ENCODE measurements at regions of chr9 and their contacts with region 1.

Region 1: GRCh38 chr9:133459476-133460404 is at the start of gene CACFD1:
- DNase-seq: peak; percentile 93
- ATAC-seq: peak; percentile 75
- H3K4me3 ChIP-seq: peak within 1 kb of the TSS; percentile 89 to 94 (median 89)
- H3K27ac ChIP-seq: peak within 1 kb of the TSS; percentile 99
- H3K4me1 ChIP-seq: peaks cover 52% of the 10 kb centered on the region
- H3K27me3 ChIP-seq: no peaks in the 10 kb centered on the region; a peak in 1 of 5 replicates
- CTCF ChIP-seq: no peak
- EP300 ChIP-seq: no peak
- POLR2A ChIP-seq: peak in 1 of 2 experiments; percentile 60; a peak in 1 of 4 replicates
- RAD21 ChIP-seq: peak; percentile 56; the same call in 1 of the 2 replicates
- total RNA-seq, gene CACFD1: 8.2 and 13.8 TPM in 2 replicates

Region 2: GRCh38 chr9:133115448-133116345 is 344.0 kb before region 1 on chr9:
- CTCF ChIA-PET with region 1: no interaction called
- POLR2A ChIA-PET with region 1: no interaction called
- in situ Hi-C with region 1: no loop called
- intact Hi-C with region 1: no loop called
- DNase-seq: no peak
- ATAC-seq: no peak
- H3K4me3 ChIP-seq: no peak overlapping the region
- H3K27ac ChIP-seq: no peak overlapping the region
- H3K4me1 ChIP-seq: peaks cover 36% of the 10 kb centered on the region
- H3K27me3 ChIP-seq: no peaks in the 10 kb centered on the region
- CTCF ChIP-seq: no peak
- EP300 ChIP-seq: no peak
- POLR2A ChIP-seq: no peak
- RAD21 ChIP-seq: no peak

Region 3: GRCh38 chr9:133347985-133348717 is 111.6 kb before region 1 on chr9 and contains the starts of genes MED22 and RPL7A:
- CTCF ChIA-PET with region 1: no interaction called
- POLR2A ChIA-PET with region 1: interaction called, 22 read pairs
- in situ Hi-C with region 1: no loop called
- intact Hi-C with region 1: no loop called
- DNase-seq: peak; percentile 94
- ATAC-seq: peak; percentile 73
- H3K4me3 ChIP-seq: peak within 1 kb of the TSS; percentile 82 to 100 (median 97)
- H3K27ac ChIP-seq: peak within 1 kb of the TSS; percentile 97
- H3K4me1 ChIP-seq: peaks cover 29% of the 10 kb centered on the region
- H3K27me3 ChIP-seq: no peaks in the 10 kb centered on the region; a peak in 1 of 5 replicates
- CTCF ChIP-seq: 0 out of 2 replicates have a peak, but pooled peaks have one; percentile 7
- EP300 ChIP-seq: 0 out of 4 replicates have a peak, but pooled peaks of 1 of the 2 experiments have one; percentile 26
- POLR2A ChIP-seq: peak in 1 of 2 experiments; percentile 99; a peak in 2 of 4 replicates
- RAD21 ChIP-seq: peak; percentile 25; the same call in 1 of the 2 replicates
- total RNA-seq, gene MED22: 19.6 and 22.1 TPM in 2 replicates
- total RNA-seq, gene RPL7A: 2,938 and 3,359 TPM in 2 replicates

Region 4: DNA sequence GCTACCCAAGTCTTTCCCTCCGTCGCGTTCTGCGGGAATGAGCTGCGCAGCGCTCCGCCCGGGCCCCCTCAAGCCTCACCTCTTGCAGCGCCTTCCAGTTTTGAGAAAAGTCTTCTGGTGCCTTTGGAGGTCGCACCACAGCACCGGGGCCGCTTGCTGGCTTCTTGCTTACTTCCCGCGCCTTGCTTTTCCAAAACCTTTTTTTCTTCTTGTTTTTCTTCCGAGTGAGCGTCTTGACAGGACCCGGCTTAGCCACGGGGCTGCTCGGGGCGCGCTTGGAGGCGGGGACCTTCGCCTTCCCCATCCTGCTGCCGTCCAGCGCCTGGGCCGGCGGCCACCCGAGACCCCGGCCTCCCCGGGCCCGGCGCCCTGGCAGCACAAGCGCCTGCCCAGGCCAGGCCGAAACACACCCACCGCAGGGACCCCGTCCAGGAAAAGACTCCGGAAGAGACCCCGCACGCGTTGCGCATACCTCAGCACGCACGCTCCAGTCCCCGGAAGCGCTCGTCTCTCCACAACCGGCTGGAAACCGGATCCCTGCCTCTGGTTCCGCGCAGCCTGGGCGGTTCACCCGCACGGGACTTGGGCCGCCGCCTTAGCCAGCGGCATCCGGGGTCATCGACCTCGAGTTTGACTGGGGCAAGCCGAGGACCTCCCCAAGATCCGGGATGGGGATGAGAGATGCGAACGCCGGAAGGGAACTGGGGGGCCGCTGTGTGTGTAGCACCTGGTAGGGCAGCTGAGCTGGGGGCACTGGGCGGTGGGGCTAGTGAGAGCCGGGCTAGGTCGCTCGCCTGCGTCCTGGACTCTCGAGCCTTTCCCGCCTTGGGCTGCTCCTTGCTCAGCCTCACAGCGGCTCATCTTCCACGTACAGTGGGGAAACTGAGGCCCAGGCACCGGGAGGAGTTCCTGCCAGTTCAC is 41.9 kb before region 1 on chr9 and contains the start of gene REXO4:
- CTCF ChIA-PET with region 1: no interaction called
- POLR2A ChIA-PET with region 1: interaction called, 19 read pairs
- in situ Hi-C with region 1: no loop called
- intact Hi-C with region 1: no loop called
- DNase-seq: peak; percentile 88
- ATAC-seq: peak; percentile 87
- H3K4me3 ChIP-seq: peak within 1 kb of the TSS; percentile 71 to 89 (median 84)
- H3K27ac ChIP-seq: peak within 1 kb of the TSS; percentile 95
- H3K4me1 ChIP-seq: peaks cover 70% of the 10 kb centered on the region
- H3K27me3 ChIP-seq: no peaks in the 10 kb centered on the region; a peak in 1 of 5 replicates
- CTCF ChIP-seq: peak; percentile 44
- EP300 ChIP-seq: peak; percentile 22 to 38; a peak in 2 of 4 replicates
- POLR2A ChIP-seq: peak; percentile 70 to 84
- RAD21 ChIP-seq: peak; percentile 51; the same call in 1 of the 2 replicates
- total RNA-seq, gene REXO4: 30.4 and 32.9 TPM in 2 replicates

Region 5: GRCh38 chr9:133470427-133470924 is 10.7 kb after region 1 on chr9:
- CTCF ChIA-PET with region 1: no interaction called
- POLR2A ChIA-PET with region 1: interaction called, 11 read pairs
- in situ Hi-C with region 1: no loop called
- intact Hi-C with region 1: no loop called
- DNase-seq: no peak
- ATAC-seq: peak; percentile 21
- H3K4me3 ChIP-seq: no peak overlapping the region
- H3K27ac ChIP-seq: no peak overlapping the region
- H3K4me1 ChIP-seq: peaks cover 10% of the 10 kb centered on the region; the same call in 1 of the 2 replicates
- H3K27me3 ChIP-seq: no peaks in the 10 kb centered on the region
- CTCF ChIP-seq: peak; percentile 32; the same call in 1 of the 2 replicates
- EP300 ChIP-seq: no peak
- POLR2A ChIP-seq: no peak; a peak in 1 of 4 replicates
- RAD21 ChIP-seq: no peak

Region 6: GRCh38 chr9:133478851-133479711 is 19.3 kb after region 1 on chr9 and contains the start of gene SLC2A6:
- CTCF ChIA-PET with region 1: no interaction called
- POLR2A ChIA-PET with region 1: interaction called, 50 read pairs
- in situ Hi-C with region 1: no loop called
- intact Hi-C with region 1: loop called (anchors 1 kb)
- DNase-seq: peak; percentile 63
- ATAC-seq: peak; percentile 98
- H3K4me3 ChIP-seq: peak within 1 kb of the TSS; percentile 68 to 76 (median 69)
- H3K27ac ChIP-seq: peak within 1 kb of the TSS; percentile 66
- H3K4me1 ChIP-seq: peaks cover 23% of the 10 kb centered on the region
- H3K27me3 ChIP-seq: peaks cover 4 to 30% of the 10 kb centered on the region in 2 experiments
- CTCF ChIP-seq: no peak
- EP300 ChIP-seq: no peak
- POLR2A ChIP-seq: no peak
- RAD21 ChIP-seq: 0 out of 2 replicates have a peak, but pooled peaks have one; percentile 11
- total RNA-seq, gene SLC2A6: 6.3 and 15.0 TPM in 2 replicates

Region 7: DNA sequence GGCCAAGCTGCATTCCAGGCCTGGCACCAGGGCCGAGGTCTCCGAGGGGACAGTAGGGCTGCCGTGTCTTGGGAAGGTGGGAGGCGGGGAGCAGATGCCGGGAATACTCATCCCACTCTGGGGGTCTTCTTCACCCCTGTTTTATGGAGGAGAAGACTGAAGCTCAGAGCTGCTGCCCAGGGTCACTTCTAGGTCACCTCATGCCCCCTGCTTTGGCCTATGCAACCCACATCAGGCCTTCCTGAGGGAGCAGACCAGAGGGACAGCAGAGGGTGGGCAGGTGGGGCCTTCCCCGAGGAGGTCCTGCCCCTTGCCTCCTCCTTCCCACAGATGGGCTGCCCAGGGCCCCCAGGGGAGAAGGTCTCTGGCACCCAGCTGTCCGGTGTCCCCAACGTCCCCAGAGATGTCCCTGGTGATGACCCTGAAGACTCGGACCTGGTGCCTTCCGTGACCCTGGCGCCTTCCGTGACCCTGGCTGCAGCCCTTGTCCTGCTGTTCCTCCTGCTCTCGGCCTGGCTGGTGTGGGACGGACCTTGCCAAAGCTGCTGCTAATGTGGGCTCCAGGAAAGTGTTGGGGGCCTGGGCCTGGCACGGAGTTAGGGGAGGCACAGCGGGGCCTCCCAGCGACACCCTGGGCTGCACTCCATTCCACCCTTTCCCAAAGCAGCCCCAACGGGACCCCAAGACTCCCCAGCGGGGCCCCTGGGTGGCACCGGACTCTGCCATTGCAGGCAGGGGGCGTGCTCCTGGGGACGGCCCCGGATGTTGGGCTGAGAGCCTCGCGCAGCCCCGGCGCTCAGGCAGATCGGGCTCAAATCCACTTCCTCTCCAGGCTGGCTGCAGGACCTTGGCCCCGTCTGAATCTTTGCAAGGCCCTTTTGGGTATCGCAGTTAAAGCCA is 25.9 kb after region 1 on chr9:
- CTCF ChIA-PET with region 1: interaction called, 4 read pairs
- POLR2A ChIA-PET with region 1: interaction called, 11 read pairs
- in situ Hi-C with region 1: no loop called
- intact Hi-C with region 1: loop called (anchors 1 kb)
- DNase-seq: no peak
- ATAC-seq: peak; percentile 67
- H3K4me3 ChIP-seq: peak overlapping the region; percentile 27 to 70 (median 47); a peak in 4 of 6 replicates
- H3K27ac ChIP-seq: no peak overlapping the region
- H3K4me1 ChIP-seq: peaks cover 54% of the 10 kb centered on the region
- H3K27me3 ChIP-seq: peaks cover 4 to 54% of the 10 kb centered on the region in 2 experiments
- CTCF ChIP-seq: no peak
- EP300 ChIP-seq: no peak
- POLR2A ChIP-seq: no peak
- RAD21 ChIP-seq: no peak